ENCODE measurements at regions of chr17 and their contacts with region 1.

Region 1: GRCh38 chr17:59786536-59787319 is 79.3 kb downstream of the VMP1 start:
- DNase-seq: peak; percentile 33
- ATAC-seq: peak; percentile 86
- H3K4me3 Mint-ChIP-seq: peak overlapping the region; percentile 72
- H3K27ac Mint-ChIP-seq: peak overlapping the region; percentile 97
- H3K4me1 Mint-ChIP-seq: peaks cover 58% of the 10 kb centered on the region
- H3K27me3 Mint-ChIP-seq: no peaks in the 10 kb centered on the region
- CTCF ChIP-seq: no peak

Region 2: GRCh38 chr17:59707114-59707970 is 79.4 kb before region 1 on chr17 and contains the starts of genes PTRH2 and VMP1:
- CTCF ChIA-PET with region 1: no interaction called
- POLR2A ChIA-PET with region 1: interaction called, 3 read pairs
- intact Hi-C with region 1: loop called (anchors 1 kb)
- DNase-seq: peak; percentile 79
- ATAC-seq: peak; percentile 95
- H3K4me3 Mint-ChIP-seq: peak within 1 kb of the TSS; percentile 99
- H3K27ac Mint-ChIP-seq: peak within 1 kb of the TSS; percentile 97
- H3K4me1 Mint-ChIP-seq: peaks cover 72% of the 10 kb centered on the region
- H3K27me3 Mint-ChIP-seq: no peaks in the 10 kb centered on the region
- CTCF ChIP-seq: no peak
- total RNA-seq, gene PTRH2: 27.0 and 29.9 TPM in 2 replicates
- total RNA-seq, gene VMP1: 158 and 176 TPM in 2 replicates

Region 3: GRCh38 chr17:59719526-59719925 is 67.2 kb before region 1 on chr17:
- CTCF ChIA-PET with region 1: no interaction called
- POLR2A ChIA-PET with region 1: no interaction called
- intact Hi-C with region 1: no loop called
- DNase-seq: no peak
- ATAC-seq: no peak
- H3K4me3 Mint-ChIP-seq: no peak overlapping the region
- H3K27ac Mint-ChIP-seq: no peak overlapping the region
- H3K4me1 Mint-ChIP-seq: peaks cover 4% of the 10 kb centered on the region
- H3K27me3 Mint-ChIP-seq: no peaks in the 10 kb centered on the region
- CTCF ChIP-seq: no peak

Region 4: DNA sequence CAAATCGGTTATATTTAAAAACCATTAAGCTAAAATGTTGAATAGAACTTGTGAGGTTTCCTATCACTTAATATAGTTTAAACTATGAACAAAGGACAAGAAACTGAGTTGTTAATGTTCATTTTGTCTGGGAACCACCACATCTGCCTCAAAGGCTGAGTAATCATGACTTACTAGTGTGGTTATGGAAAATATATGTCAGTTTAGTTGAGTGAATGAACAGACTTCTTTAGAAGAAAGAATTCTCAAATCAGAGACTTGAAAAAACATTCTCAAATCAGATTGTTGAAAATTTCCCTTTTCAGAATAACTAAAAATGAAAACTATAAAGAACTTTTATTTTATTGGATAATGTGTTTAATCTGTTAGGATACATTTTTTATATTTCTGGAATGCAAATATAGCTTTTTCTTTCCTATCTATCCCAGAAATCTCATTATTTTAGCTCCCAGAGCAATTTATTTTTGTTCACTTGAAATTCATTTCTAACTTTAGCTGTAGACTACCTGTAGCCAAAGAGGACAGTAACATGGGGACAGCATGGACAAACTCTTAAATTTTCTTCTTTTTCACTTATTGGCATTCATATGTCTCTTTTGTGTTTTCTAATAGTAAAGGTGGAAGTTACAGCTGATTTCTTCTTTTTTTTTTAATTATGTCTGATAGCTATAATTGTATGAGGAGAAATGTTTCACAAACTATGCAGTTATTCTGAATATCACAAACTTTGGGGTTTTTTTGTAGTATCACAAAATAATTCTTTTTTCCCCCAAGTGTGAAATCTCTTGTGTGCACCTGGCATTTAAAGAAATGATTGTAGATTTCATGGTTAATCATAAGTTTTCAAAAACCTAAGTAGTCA is 24.0 kb before region 1 on chr17:
- CTCF ChIA-PET with region 1: no interaction called
- POLR2A ChIA-PET with region 1: interaction called, 12 read pairs
- intact Hi-C with region 1: loop called (anchors 2 kb)
- DNase-seq: no peak
- ATAC-seq: peak; percentile 21
- H3K4me3 Mint-ChIP-seq: no peak overlapping the region
- H3K27ac Mint-ChIP-seq: peak overlapping the region; percentile 39
- H3K4me1 Mint-ChIP-seq: peaks cover 16% of the 10 kb centered on the region
- H3K27me3 Mint-ChIP-seq: no peaks in the 10 kb centered on the region
- CTCF ChIP-seq: no peak

Region 5: GRCh38 chr17:59829217-59830006 is 42.7 kb after region 1 on chr17:
- CTCF ChIA-PET with region 1: interaction called, 9 read pairs
- POLR2A ChIA-PET with region 1: interaction called, 154 read pairs
- intact Hi-C with region 1: loop called (anchors 1 kb)
- DNase-seq: no peak
- ATAC-seq: peak; percentile 88
- H3K4me3 Mint-ChIP-seq: peak overlapping the region; percentile 81
- H3K27ac Mint-ChIP-seq: peak overlapping the region; percentile 88
- H3K4me1 Mint-ChIP-seq: peaks cover 80% of the 10 kb centered on the region
- H3K27me3 Mint-ChIP-seq: no peaks in the 10 kb centered on the region
- CTCF ChIP-seq: no peak

Region 6: GRCh38 chr17:59846394-59847165 is 59.9 kb after region 1 on chr17:
- CTCF ChIA-PET with region 1: interaction called, 36 read pairs
- POLR2A ChIA-PET with region 1: interaction called, 379 read pairs
- intact Hi-C with region 1: loop called (anchors 1 kb)
- DNase-seq: peak; percentile 33
- ATAC-seq: peak; percentile 67
- H3K4me3 Mint-ChIP-seq: peak overlapping the region; percentile 50
- H3K27ac Mint-ChIP-seq: peak overlapping the region; percentile 92
- H3K4me1 Mint-ChIP-seq: peaks cover 75% of the 10 kb centered on the region
- H3K27me3 Mint-ChIP-seq: no peaks in the 10 kb centered on the region
- CTCF ChIP-seq: no peak

Region 7: DNA sequence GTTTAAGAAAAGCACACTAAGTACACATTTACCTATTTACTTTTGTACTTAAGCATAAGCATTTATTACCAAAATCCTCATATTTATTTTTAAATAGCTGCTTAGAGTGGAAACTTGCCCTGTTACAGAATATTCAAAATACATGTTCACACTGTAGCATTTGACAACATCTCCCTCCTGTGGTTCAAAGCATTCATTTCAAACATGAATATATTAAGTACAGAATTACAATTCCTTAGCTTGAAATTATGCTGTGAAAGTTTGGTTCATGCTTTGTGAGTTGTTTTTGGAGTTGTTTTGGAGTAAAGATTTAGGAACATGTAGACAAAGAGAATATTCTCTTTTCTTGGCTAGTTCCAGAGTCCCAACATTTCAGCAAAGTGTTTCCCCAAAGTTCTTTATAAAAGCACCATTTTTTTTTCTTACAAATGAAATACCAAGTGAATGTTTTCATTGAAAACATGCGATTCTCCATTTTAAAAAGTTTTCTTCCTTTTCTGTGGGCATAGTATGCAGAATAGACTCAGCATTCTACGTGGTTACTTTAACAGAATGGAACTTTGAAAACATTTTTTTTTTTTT is 72.8 kb after region 1 on chr17:
- CTCF ChIA-PET with region 1: interaction called, 21 read pairs
- POLR2A ChIA-PET with region 1: interaction called, 21 read pairs
- intact Hi-C with region 1: loop called (anchors 1 kb)
- DNase-seq: no peak
- ATAC-seq: peak; percentile 71
- H3K4me3 Mint-ChIP-seq: no peak overlapping the region
- H3K27ac Mint-ChIP-seq: peak overlapping the region; percentile 56
- H3K4me1 Mint-ChIP-seq: peaks cover 7% of the 10 kb centered on the region
- H3K27me3 Mint-ChIP-seq: no peaks in the 10 kb centered on the region
- CTCF ChIP-seq: peak; percentile 36